Activated T-helper 2 cell treated with anti-CD3 and anti-CD28 coated beads, Interferon-gamma antibody, Interleukin-2, Interleukin-4, amounts not matched to agents 10 μg/mL and 5 μg/mL and 100 μg/mL, durations not matched to agents 14 hours and 24 hours and 36 hours (primary cell): ENCODE measurements at regions of chr16 and their contacts with region 1.

Region 1: DNA sequence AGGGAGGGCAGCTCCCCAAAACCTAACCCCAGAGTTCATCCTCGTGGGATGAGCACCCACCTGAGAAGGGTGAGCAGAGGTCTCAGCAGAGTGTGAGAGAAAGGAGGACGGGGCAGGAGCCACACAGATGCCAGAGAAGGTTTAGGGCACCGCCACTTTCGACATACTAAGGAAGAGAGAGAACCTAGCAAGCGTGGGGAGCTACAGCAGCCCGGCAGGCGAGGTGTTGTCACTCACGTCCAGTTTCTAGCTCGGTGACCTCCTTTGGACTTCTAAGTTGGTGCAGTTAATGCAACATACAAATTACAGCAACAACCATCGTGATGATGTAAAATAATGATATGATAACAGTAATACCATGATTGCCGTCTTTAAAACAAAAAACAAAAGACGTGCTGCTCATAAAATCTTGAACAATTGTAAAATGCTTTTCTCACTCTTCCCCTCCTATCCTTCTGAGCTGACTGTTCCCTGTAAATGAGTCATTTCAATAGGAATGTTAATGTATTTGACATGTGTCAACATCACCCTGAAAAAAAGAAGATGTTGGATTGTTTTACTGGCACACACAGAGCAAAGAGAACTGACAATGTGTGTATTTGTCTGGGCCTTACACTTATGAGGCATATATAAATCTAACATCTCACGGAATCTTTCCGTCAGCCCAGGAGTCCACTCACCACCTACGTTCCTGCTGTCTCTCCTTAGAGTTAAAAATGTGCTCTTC is 158.2 kb upstream of the MAF start:
- DNase-seq: no peak
- H3K4me3 Mint-ChIP-seq: no peak overlapping the region
- H3K27ac Mint-ChIP-seq: no peak overlapping the region
- H3K4me1 Mint-ChIP-seq: peaks cover 35% of the 10 kb centered on the region
- H3K27me3 Mint-ChIP-seq: peaks cover 2% of the 10 kb centered on the region

Region 2: DNA sequence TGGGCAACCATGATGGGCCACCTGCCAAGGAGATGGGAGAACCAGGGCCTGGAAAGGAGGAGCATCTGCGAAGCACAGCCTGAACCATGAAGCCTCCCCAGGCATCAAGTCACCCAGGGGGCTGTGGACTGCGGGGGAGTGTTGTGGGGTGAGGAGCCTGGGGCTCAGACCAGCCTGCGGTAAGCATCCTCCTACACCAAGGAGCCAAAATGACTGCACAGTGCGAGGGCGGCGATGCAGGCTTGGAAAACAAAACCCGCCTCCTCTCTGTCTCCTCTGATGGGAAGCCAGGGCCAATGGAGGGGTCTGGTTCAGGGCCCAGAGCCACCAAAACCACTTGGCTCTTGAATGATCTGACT is 140.1 kb before region 1 on chr16:
- intact Hi-C with region 1: loop called (anchors 5 kb)
- DNase-seq: peak; percentile 21
- H3K4me3 Mint-ChIP-seq: peak overlapping the region; percentile 54
- H3K27ac Mint-ChIP-seq: peak overlapping the region; percentile 86
- H3K4me1 Mint-ChIP-seq: peaks cover 60% of the 10 kb centered on the region
- H3K27me3 Mint-ChIP-seq: peaks cover 20% of the 10 kb centered on the region

Region 3: GRCh38 chr16:79664407-79664806 is 94.4 kb before region 1 on chr16:
- intact Hi-C with region 1: no loop called
- DNase-seq: no peak
- H3K4me3 Mint-ChIP-seq: no peak overlapping the region
- H3K27ac Mint-ChIP-seq: no peak overlapping the region
- H3K4me1 Mint-ChIP-seq: peaks cover 1% of the 10 kb centered on the region
- H3K27me3 Mint-ChIP-seq: peaks cover 11% of the 10 kb centered on the region

Region 4: DNA sequence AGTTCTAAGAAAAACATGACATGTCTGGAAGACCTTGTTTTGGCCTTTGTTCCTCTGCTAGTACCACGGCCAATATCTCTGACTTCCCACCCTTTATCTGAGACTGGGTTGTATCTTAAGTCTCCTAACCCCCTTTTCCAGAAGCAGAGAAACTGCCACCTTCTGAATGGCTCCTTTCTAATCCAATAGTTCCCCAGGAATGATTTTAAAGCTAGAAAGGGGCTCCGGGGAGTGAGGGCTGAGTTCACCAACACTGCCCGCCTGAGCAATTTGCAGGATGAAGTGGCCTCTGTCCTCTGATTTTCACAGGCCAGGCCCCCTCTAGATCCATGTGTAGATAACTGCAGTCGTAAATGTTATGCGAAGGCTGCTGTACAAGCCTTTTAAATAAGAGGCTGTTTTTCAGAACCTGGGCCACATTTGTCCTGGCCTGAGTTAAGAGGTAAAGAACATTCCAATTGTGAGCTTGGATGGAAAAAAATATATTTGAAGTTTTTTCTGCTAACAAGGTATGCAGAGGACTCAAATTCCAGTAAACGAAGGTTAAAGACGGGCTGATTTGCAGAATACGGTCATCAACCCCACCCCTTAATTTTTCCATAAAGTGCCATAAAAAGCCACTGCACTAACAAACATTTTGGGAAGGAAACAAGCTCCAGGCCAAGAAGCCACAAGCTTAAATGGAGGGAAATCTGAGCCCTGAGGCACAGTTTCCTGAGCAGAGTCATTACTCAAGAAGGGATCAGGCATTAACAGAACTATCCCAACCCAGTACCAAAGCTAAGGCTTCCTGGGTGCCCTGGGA is 41.2 kb before region 1 on chr16:
- intact Hi-C with region 1: loop called (anchors 2 kb)
- DNase-seq: no peak
- H3K4me3 Mint-ChIP-seq: peak overlapping the region; percentile 47
- H3K27ac Mint-ChIP-seq: peak overlapping the region; percentile 63
- H3K4me1 Mint-ChIP-seq: peaks cover 40% of the 10 kb centered on the region
- H3K27me3 Mint-ChIP-seq: peaks cover 7% of the 10 kb centered on the region